ENCODE measurements at regions of chr12 and their contacts with region 1.

Region 1: GRCh38 chr12:9647825-9648700 is 21.4 kb upstream of the CLEC2D start:
- DNase-seq: peak; percentile 75 to 97 (median 88)
- ATAC-seq: peak; percentile 74
- H3K4me3 ChIP-seq: peak overlapping the region; percentile 90
- H3K4me3 Mint-ChIP-seq: peak overlapping the region; percentile 94
- H3K27ac ChIP-seq: peak overlapping the region; percentile 83 to 90
- H3K27ac Mint-ChIP-seq: peak overlapping the region; percentile 89
- H3K4me1 ChIP-seq: peaks cover 23% of the 10 kb centered on the region
- H3K4me1 Mint-ChIP-seq: peaks cover 62% of the 10 kb centered on the region
- H3K27me3 ChIP-seq: no peaks in the 10 kb centered on the region
- H3K27me3 Mint-ChIP-seq: no peaks in the 10 kb centered on the region
- CTCF ChIP-seq: no peak

Region 2: DNA sequence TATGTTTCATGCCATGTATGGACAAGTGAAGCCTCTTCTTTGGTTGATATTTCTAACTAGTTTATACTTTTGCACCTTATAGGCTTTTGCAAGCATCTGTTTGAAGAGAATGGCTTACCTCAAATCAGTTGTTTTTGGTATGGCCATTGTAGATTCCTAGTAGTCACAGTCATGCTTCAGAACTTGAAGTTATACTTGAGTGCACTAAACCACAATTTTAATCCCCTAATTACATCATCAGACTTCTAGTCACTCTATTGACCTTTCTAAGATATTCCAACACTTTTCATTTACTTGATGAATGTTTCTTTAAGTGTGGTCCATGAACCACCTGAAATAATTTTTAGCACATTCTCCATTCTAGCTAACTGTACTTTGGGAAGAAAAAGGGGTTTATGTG is 21.8 kb before region 1 on chr12:
- CTCF ChIA-PET with region 1: no interaction called
- POLR2A ChIA-PET with region 1: interaction called, 77 read pairs
- intact Hi-C with region 1: no loop called
- DNase-seq: no peak
- ATAC-seq: no peak
- H3K4me3 ChIP-seq: no peak overlapping the region
- H3K4me3 Mint-ChIP-seq: no peak overlapping the region
- H3K27ac ChIP-seq: no peak overlapping the region
- H3K27ac Mint-ChIP-seq: no peak overlapping the region
- H3K4me1 ChIP-seq: no peaks in the 10 kb centered on the region
- H3K4me1 Mint-ChIP-seq: peaks cover 14% of the 10 kb centered on the region
- H3K27me3 ChIP-seq: no peaks in the 10 kb centered on the region
- H3K27me3 Mint-ChIP-seq: no peaks in the 10 kb centered on the region
- CTCF ChIP-seq: no peak

Region 3: DNA sequence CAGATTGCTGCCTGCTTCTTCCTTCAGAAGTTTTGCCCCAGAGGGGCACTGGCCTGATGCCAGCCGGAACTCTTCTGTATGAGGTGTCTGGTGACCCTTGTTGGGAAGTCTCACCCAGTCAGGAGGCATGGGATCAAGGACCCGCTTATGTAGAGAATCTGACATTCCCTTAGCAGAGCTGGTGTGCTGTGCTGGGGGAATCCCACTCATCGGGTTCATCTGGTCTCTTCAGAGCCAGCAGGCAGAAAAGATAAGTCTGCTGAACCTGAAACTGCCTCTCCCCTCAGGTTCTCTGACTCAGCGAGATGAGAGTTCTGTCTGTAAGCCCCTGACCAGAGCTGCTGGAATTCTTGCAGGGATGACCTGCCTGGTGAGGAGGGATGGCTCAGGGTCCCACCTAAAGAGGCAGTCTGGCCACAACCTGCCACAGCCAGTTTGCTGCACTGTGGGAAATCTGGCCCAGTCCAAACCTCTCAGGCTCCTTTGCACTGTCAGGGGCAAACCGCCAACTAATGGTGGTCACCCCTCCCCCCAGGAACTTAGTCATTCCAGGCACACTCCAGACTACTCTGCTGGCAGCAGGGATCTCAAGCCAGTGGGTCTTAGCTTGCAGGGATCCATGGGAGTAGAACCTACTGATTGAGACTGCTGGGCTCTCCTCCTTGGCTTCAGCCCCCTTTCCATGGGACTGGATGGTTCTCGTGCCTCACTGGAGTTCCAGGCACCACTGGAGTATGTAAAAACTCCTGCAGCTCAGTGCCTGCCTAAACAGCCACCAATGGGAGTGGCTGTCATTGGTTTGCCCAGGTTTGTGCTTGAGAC is 25.6 kb after region 1 on chr12:
- CTCF ChIA-PET with region 1: interaction called, 7 read pairs
- POLR2A ChIA-PET with region 1: interaction called, 648 read pairs
- intact Hi-C with region 1: loop called (anchors 1 kb)
- DNase-seq: peak in 10 of 14 experiments; percentile 18 to 79 (median 46)
- ATAC-seq: peak; percentile 38
- H3K4me3 ChIP-seq: peak overlapping the region; percentile 72
- H3K4me3 Mint-ChIP-seq: peak overlapping the region; percentile 87
- H3K27ac ChIP-seq: peak overlapping the region; percentile 77 to 88
- H3K27ac Mint-ChIP-seq: peak overlapping the region; percentile 90
- H3K4me1 ChIP-seq: peaks cover 37% of the 10 kb centered on the region
- H3K4me1 Mint-ChIP-seq: peaks cover 82% of the 10 kb centered on the region
- H3K27me3 ChIP-seq: no peaks in the 10 kb centered on the region
- H3K27me3 Mint-ChIP-seq: no peaks in the 10 kb centered on the region
- CTCF ChIP-seq: no peak

Region 4: DNA sequence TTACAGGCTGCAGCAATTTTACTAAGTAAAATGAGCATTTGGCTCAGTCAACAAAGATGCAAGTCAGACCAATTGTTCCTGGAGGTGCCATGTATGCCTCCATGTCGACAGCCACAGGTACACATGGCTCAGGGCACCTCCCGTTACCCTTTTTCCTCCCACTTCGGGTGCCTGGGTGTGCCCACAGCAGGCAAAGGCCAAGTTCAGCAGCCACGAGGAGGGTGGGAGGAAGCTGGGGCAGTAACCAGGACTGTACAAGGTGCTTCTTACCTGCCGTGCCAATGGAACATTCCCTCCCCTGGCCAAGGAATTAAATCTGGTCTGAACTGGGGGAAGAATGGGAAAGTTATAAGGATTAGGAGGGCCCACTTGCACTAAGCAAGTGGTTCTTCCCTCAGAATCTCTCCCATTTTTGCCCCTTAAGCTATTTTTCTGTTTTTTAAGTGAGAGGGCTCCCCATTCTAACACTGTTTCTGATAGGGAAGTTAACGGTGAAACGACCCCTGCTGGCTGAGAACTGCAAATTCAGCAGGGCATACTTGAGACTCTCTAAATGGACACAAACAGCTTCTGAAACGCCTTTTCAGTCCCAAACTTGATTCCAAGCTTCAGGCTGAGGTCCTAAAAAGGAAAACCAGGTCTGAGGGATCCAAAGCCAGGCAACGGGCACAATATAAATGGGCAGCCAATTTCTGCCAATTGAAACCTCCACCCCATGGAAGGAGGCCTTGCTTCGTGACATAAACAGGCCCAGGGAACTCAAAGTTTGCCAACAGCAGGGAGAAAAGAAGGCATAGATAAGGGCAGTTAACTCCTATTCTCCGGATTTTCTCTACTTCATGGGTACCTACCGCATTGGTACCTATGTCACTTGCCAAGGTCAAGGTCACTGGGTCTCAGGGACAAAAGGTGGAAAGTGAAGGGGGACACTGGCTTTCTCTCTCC is 60.1 kb after region 1 on chr12:
- CTCF ChIA-PET with region 1: interaction called, 15 read pairs
- POLR2A ChIA-PET with region 1: interaction called, 97 read pairs
- intact Hi-C with region 1: loop called in 1 of 2 experiments (anchors 1 kb)
- DNase-seq: peak; percentile 45 to 87 (median 60)
- ATAC-seq: peak; percentile 85
- H3K4me3 ChIP-seq: peak overlapping the region; percentile 30
- H3K4me3 Mint-ChIP-seq: peak overlapping the region; percentile 79
- H3K27ac ChIP-seq: peak overlapping the region; percentile 68 to 71
- H3K27ac Mint-ChIP-seq: peak overlapping the region; percentile 89
- H3K4me1 ChIP-seq: peaks cover 23% of the 10 kb centered on the region
- H3K4me1 Mint-ChIP-seq: peaks cover 79% of the 10 kb centered on the region
- H3K27me3 ChIP-seq: no peaks in the 10 kb centered on the region
- H3K27me3 Mint-ChIP-seq: no peaks in the 10 kb centered on the region
- CTCF ChIP-seq: peak; percentile 74

Region 5: GRCh38 chr12:9760699-9761418 is 112.8 kb after region 1 on chr12 and contains the start of gene CD69:
- CTCF ChIA-PET with region 1: no interaction called
- POLR2A ChIA-PET with region 1: interaction called, 123 read pairs
- intact Hi-C with region 1: loop called (anchors 1 to 5 kb)
- DNase-seq: peak; percentile 56 to 96 (median 69)
- ATAC-seq: peak; percentile 43
- H3K4me3 ChIP-seq: peak within 1 kb of the TSS; percentile 79
- H3K4me3 Mint-ChIP-seq: peak within 1 kb of the TSS; percentile 97
- H3K27ac ChIP-seq: peak within 1 kb of the TSS; percentile 98
- H3K27ac Mint-ChIP-seq: peak within 1 kb of the TSS; percentile 99
- H3K4me1 ChIP-seq: peaks cover 34% of the 10 kb centered on the region
- H3K4me1 Mint-ChIP-seq: peaks cover 68% of the 10 kb centered on the region
- H3K27me3 ChIP-seq: no peaks in the 10 kb centered on the region
- H3K27me3 Mint-ChIP-seq: no peaks in the 10 kb centered on the region
- CTCF ChIP-seq: no peak
- total RNA-seq, gene CD69: 631 to 659 TPM

Region 6: GRCh38 chr12:10212201-10213131 is 564.4 kb after region 1 on chr12 and contains the start of gene GABARAPL1:
- CTCF ChIA-PET with region 1: no interaction called
- POLR2A ChIA-PET with region 1: no interaction called
- intact Hi-C with region 1: loop called in 1 of 2 experiments (anchors 10 kb)
- DNase-seq: peak; percentile 69 to 95 (median 86)
- ATAC-seq: peak; percentile 75
- H3K4me3 ChIP-seq: peak within 1 kb of the TSS; percentile 87
- H3K4me3 Mint-ChIP-seq: peak within 1 kb of the TSS; percentile 95
- H3K27ac ChIP-seq: peak within 1 kb of the TSS; percentile 77 to 89
- H3K27ac Mint-ChIP-seq: peak within 1 kb of the TSS; percentile 98
- H3K4me1 ChIP-seq: peaks cover 31% of the 10 kb centered on the region
- H3K4me1 Mint-ChIP-seq: peaks cover 31% of the 10 kb centered on the region
- H3K27me3 ChIP-seq: no peaks in the 10 kb centered on the region
- H3K27me3 Mint-ChIP-seq: peaks cover 6% of the 10 kb centered on the region
- CTCF ChIP-seq: no peak
- total RNA-seq, gene GABARAPL1: 267 to 276 TPM